AG04450 (cell line): ENCODE measurements at regions of chr13 and their contacts with region 1.

Region 1: GRCh38 chr13:60448907-60449510 is 52.0 kb downstream of the TDRD3 start:
- DNase-seq: peak; percentile 15
- H3K4me3 ChIP-seq: no peak overlapping the region
- H3K27ac ChIP-seq: no peak overlapping the region
- H3K27me3 ChIP-seq: no peaks in the 10 kb centered on the region
- CTCF ChIP-seq: peak; percentile 88

Region 2: DNA sequence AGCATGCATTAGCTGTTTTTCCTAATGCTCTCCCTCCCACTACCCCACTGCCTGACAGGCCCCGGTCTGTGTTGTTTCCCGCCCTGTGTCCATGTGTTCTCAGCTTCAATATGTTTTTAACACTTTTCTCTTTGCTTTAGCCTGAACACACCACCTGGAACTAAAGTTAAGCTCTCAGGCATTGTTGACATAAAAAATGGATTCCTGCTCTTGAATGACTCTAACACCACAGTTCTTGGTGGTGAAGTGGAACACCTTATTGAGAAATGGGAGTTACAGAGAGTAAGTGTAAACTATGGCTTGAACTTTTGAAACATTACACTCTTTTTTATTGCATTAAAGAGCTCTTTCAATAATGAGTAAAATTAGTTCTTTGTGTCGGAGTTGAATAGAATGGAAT is 18.1 kb after region 1 on chr13:
- CTCF ChIA-PET with region 1: interaction called, 28 read pairs
- POLR2A ChIA-PET with region 1: no interaction called
- DNase-seq: no peak
- H3K4me3 ChIP-seq: no peak overlapping the region
- H3K27ac ChIP-seq: no peak overlapping the region
- H3K27me3 ChIP-seq: no peaks in the 10 kb centered on the region
- CTCF ChIP-seq: no peak

Region 3: DNA sequence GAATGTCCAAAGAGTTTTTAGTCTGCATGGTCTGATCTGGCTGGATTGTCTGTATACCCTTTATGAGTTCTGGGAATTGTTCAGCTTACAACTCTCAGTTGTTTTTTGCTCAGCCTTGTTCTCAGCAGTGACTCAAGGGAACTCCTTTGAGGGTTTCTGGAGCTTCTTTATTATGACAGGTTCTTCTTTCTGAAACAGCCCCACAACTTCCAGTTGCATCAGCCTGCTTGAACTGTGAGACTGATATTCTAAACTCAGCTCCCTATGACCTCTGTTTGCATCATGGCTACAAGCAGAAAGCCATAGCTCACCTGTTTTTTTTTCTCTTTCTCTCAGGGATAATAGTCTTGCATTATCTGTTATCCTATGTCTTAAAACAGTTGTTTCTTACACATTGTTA is 33.0 kb after region 1 on chr13:
- CTCF ChIA-PET with region 1: interaction called, 10 read pairs
- POLR2A ChIA-PET with region 1: no interaction called
- DNase-seq: no peak
- H3K4me3 ChIP-seq: no peak overlapping the region
- H3K27ac ChIP-seq: no peak overlapping the region
- H3K27me3 ChIP-seq: no peaks in the 10 kb centered on the region
- CTCF ChIP-seq: no peak

Region 4: DNA sequence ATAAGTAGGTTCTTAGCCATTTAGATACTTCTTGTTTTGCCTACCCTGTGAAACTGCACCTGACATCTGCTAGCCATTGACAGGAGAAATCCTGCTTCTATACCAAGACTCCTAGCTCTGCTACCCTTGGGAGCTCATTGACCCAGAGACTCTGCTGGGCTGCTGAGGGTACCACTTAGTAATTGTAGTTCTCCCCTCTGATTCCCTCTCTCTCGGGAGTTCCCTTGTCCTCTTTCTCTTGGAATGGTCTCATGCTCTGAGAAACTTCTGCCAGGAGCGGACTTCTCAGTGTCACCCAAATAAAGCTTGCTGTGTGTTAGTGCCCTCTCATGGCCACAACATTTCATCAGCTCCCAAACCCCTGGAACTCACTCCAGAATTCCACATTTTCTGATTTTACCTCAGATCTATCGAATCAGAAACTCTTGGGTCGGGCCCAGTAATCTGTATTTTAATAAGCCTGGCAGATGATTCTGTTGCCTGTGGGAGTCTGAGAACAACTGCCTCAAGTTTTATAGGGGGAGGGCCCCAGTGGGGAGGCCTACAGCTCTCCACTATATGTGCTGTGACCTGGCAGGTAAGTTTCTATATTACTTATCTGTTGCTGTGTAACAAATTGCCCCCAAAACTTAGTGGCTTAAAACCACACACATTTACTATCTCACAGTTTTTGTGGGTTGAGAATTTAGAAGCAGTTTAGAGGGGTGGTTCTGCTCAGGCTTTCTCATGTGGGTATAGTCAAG is 169.2 kb after region 1 on chr13:
- CTCF ChIA-PET with region 1: interaction called, 34 read pairs
- POLR2A ChIA-PET with region 1: no interaction called
- DNase-seq: no peak
- H3K4me3 ChIP-seq: no peak overlapping the region
- H3K27ac ChIP-seq: no peak overlapping the region
- H3K27me3 ChIP-seq: peaks cover 4% of the 10 kb centered on the region
- CTCF ChIP-seq: peak; percentile 46

Region 5: GRCh38 chr13:60627071-60627686 is 178.2 kb after region 1 on chr13:
- CTCF ChIA-PET with region 1: interaction called, 10 read pairs
- POLR2A ChIA-PET with region 1: no interaction called
- DNase-seq: no peak
- H3K4me3 ChIP-seq: no peak overlapping the region
- H3K27ac ChIP-seq: no peak overlapping the region
- H3K27me3 ChIP-seq: no peaks in the 10 kb centered on the region
- CTCF ChIP-seq: peak; percentile 60

Region 6: GRCh38 chr13:61410669-61411297 is 961.8 kb after region 1 on chr13:
- CTCF ChIA-PET with region 1: interaction called, 36 read pairs
- POLR2A ChIA-PET with region 1: no interaction called
- DNase-seq: no peak
- H3K4me3 ChIP-seq: no peak overlapping the region
- H3K27ac ChIP-seq: no peak overlapping the region
- H3K27me3 ChIP-seq: peaks cover 6% of the 10 kb centered on the region
- CTCF ChIP-seq: peak; percentile 61

Region 7: DNA sequence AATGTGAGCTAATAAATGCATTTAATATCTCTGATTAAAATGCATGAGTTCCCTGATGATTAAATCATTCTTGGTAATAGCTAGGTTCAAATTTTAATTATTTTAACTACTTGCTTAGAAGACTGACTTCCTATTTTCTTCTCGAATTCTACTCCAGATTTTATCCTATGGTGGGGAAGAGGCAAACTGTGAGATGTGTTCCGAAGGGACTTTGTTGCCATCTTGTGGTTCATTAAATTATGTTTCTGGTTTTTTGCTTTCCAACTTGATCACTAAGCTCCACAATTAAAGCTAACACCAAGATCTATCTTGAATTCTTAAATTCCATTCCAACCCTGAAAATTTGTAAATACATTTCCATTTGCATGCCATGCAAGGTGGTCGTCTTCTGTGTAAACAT is 1505.1 kb after region 1 on chr13:
- CTCF ChIA-PET with region 1: interaction called, 10 read pairs
- POLR2A ChIA-PET with region 1: no interaction called
- DNase-seq: no peak
- H3K4me3 ChIP-seq: no peak overlapping the region
- H3K27ac ChIP-seq: no peak overlapping the region
- H3K27me3 ChIP-seq: no peaks in the 10 kb centered on the region
- CTCF ChIP-seq: no peak